HCT116 (cell line): ENCODE measurements at regions of chr9 and their contacts with region 1.

Region 1: GRCh38 chr9:124392871-124393460 is 22.3 kb downstream of the PSMB7 start:
- DNase-seq: peak; percentile 39
- ATAC-seq: peak; percentile 85
- H3K4me3 ChIP-seq: no peak overlapping the region
- H3K27ac ChIP-seq: no peak overlapping the region
- H3K4me1 ChIP-seq: peaks cover 2 to 43% of the 10 kb centered on the region in 2 experiments; a peak in 2 of 4 replicates
- H3K27me3 ChIP-seq: no peaks in the 10 kb centered on the region
- CTCF ChIP-seq: peak; percentile 20 to 62 (median 51); a peak in 4 of 6 replicates
- POLR2A ChIP-seq: no peak
- RAD21 ChIP-seq: peak; percentile 45

Region 2: DNA sequence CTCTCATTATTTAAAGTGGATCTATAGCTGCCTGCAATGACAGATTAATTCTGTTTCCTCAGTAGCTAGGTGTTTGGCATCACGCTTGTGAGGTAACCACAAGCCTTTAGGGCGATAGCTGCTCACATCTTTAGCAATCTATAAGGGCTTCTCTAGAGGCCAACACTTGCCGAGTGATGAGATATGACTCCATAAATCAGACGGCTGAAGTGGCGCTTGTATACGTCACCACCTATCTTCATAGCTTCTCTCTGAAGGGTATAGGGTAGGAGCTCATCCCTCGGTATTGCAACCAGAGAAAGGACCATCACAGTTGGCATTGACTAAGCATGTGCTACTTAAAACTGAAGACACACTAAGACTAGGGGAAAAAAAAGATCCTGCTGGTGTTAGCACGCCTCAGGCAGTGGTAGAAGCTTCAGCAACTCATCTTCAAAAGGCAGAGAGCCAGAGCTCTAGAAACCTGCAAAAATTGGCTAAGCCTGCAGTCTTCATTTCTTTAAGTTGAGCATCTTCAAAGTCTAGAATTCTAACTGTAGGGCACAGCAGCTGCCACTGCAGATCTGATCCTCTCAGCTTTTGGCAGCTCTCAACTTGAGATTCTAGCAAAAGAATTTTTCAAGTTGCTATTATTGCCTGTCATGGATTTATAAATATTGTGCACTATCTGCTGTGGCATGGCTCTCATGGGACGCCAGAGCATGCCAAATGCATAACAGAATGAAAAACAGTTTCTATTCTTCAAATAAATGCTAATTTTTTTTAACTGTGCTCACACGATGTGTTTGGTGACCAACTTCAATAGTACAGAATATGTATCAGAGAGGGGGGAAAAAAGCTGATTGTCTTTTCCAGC is 15.2 kb before region 1 on chr9:
- CTCF ChIA-PET with region 1: interaction called, 10 read pairs
- POLR2A ChIA-PET with region 1: no interaction called
- RAD21 ChIA-PET with region 1: no interaction called
- intact Hi-C with region 1: no loop called
- DNase-seq: no peak
- ATAC-seq: no peak
- H3K4me3 ChIP-seq: no peak overlapping the region
- H3K27ac ChIP-seq: no peak overlapping the region
- H3K4me1 ChIP-seq: no peaks in the 10 kb centered on the region
- H3K27me3 ChIP-seq: no peaks in the 10 kb centered on the region
- CTCF ChIP-seq: no peak
- POLR2A ChIP-seq: no peak
- RAD21 ChIP-seq: no peak

Region 3: DNA sequence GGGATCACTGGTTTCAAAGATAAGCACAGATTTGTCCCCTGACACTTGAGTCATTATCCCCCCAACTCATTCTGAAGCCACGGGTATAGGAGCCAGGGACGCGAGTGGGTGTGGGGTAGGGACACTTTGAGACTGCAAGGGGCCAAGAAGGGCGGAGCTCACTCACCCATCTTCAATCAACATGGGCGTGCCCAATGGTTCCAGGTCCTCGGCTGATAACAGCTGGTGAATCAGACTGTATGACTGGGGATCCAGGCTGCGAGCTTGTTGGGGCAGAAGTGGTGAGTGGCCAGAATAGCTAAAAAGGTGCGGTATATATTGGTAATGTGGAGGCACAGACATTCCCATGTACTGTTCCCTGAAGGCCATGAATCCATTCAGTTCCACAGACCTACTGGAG is 145.0 kb after region 1 on chr9:
- CTCF ChIA-PET with region 1: interaction called, 13 read pairs
- POLR2A ChIA-PET with region 1: no interaction called
- RAD21 ChIA-PET with region 1: no interaction called
- intact Hi-C with region 1: no loop called
- DNase-seq: no peak
- ATAC-seq: no peak
- H3K4me3 ChIP-seq: no peak overlapping the region
- H3K27ac ChIP-seq: no peak overlapping the region
- H3K4me1 ChIP-seq: no peaks in the 10 kb centered on the region
- H3K27me3 ChIP-seq: no peaks in the 10 kb centered on the region
- CTCF ChIP-seq: no peak
- POLR2A ChIP-seq: no peak
- RAD21 ChIP-seq: no peak